Activated B cell treated with CpG ODN at 0.5 μM for 24 hours (primary cell): ENCODE measurements at regions of chr22 and their contacts with region 1.

Region 1: DNA sequence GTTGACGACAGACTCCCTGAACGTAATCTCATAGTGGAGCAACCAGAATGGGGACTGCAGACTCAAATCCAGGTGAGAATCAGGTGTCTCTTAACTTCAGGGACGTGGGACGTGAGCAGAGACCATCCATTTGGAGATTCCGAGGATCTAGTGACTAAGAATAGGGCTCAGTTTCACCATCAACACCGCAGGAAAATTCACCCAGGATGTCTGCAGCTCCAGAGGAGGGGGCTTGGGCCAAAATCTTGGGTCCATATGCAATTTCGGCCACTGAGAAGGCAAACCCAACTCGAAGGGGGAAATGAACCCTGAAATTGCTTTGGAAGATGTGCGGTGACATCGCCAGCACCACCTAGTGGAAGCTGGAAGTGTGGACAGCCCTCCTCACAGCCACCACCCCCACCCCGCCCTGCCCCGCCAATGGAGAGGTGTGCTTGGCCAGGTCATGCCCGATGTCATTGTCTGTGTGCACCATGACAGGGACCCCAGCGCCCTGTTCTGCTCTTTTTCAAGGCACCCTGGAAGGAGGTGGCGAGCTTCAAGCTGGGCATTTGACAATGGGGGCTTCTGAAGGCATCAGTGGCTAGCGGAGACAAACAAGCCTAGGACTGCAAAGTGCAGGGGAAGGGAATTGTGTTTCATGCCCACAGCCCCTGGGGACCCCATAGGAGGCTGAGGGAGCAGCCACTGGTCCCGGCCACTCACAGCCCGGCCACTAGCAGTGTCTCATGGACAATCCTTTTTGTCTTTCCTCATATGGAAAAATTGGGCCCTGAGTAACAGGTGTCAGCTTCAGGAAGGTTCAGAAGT is 24.8 kb downstream of the APOL1 start:
- DNase-seq: peak; percentile 43
- ATAC-seq: peak; percentile 86
- H3K4me3 Mint-ChIP-seq: no peak overlapping the region
- H3K27ac Mint-ChIP-seq: peak overlapping the region; percentile 46
- H3K4me1 Mint-ChIP-seq: peaks cover 17% of the 10 kb centered on the region
- H3K27me3 Mint-ChIP-seq: no peaks in the 10 kb centered on the region
- CTCF ChIP-seq: no peak

Region 2: DNA sequence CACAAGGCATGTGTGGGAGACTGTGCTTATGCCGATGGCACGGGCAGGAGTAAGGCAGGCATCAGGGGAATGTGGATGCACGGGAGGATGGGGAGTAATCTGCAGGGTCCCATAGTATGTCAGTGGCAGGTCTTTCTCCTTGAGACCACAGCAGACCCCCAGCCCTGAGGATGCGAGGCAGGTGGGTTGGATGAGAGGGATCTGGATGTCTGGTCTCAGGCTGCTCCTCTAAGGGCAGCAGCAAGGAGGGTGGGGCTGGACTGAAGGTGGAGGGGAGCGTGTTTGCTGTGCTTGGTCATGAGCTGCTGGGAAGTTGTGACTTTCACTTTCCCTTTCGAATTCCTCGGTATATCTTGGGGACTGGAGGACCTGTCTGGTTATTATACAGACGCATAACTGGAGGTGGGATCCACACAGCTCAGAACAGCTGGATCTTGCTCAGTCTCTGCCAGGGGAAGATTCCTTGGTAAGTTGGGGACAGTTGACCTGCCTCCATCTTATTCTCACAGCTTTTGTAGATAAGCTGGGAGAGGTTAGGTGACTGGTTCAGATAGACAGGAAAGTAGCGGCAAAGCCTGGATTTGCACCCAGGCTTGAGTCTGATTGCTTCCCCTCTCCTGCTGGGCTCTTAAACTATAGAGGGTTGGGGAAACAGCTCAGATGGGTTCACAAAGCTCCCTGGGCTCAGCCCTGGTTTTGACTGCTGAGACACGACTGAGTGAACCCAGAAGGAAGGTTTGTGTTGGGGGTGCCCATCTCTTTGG is 24.8 kb before region 1 on chr22 and contains the start of gene APOL1:
- CTCF ChIA-PET with region 1: interaction called, 10 read pairs
- POLR2A ChIA-PET with region 1: no interaction called
- intact Hi-C with region 1: no loop called
- DNase-seq: peak; percentile 26
- ATAC-seq: peak; percentile 94
- H3K4me3 Mint-ChIP-seq: peak within 1 kb of the TSS; percentile 91
- H3K27ac Mint-ChIP-seq: peak within 1 kb of the TSS; percentile 86
- H3K4me1 Mint-ChIP-seq: peaks cover 26% of the 10 kb centered on the region
- H3K27me3 Mint-ChIP-seq: no peaks in the 10 kb centered on the region
- CTCF ChIP-seq: no peak
- total RNA-seq, gene APOL1: 10.4 and 10.7 TPM in 2 replicates